Activated CD4-positive, alpha-beta memory T cell treated with anti-CD3 and anti-CD28 coated beads, Interleukin-2, amount 10 ng/mL, durations not matched to agents 7 days and 5 days (primary cell): ENCODE measurements at regions of chr17 and their contacts with region 1.

Region 1: DNA sequence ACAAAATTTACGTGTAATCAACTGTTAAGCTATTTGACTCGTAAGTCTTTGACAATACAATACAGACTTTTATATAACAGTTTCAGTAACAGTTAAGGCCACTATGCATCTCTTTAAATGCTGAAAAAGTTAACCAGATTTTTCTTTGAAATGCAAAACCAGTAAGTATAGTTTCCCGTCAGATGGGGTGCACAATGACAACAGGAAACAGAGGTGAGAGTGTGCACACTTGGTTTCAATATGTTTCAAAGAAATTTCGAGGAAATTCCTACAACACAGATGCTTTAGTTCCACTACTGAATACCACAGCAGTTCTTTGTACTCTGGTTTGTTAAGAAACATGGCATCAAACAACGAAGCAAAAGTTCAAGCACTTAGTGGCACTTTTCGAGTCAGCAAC is 48.4 kb downstream of the RNF157 start:
- DNase-seq: peak; percentile 59
- H3K4me3 Mint-ChIP-seq: peak overlapping the region; percentile 62
- H3K27ac Mint-ChIP-seq: peak overlapping the region; percentile 96
- H3K4me1 Mint-ChIP-seq: peaks cover 88% of the 10 kb centered on the region
- H3K27me3 Mint-ChIP-seq: no peaks in the 10 kb centered on the region

Region 2: DNA sequence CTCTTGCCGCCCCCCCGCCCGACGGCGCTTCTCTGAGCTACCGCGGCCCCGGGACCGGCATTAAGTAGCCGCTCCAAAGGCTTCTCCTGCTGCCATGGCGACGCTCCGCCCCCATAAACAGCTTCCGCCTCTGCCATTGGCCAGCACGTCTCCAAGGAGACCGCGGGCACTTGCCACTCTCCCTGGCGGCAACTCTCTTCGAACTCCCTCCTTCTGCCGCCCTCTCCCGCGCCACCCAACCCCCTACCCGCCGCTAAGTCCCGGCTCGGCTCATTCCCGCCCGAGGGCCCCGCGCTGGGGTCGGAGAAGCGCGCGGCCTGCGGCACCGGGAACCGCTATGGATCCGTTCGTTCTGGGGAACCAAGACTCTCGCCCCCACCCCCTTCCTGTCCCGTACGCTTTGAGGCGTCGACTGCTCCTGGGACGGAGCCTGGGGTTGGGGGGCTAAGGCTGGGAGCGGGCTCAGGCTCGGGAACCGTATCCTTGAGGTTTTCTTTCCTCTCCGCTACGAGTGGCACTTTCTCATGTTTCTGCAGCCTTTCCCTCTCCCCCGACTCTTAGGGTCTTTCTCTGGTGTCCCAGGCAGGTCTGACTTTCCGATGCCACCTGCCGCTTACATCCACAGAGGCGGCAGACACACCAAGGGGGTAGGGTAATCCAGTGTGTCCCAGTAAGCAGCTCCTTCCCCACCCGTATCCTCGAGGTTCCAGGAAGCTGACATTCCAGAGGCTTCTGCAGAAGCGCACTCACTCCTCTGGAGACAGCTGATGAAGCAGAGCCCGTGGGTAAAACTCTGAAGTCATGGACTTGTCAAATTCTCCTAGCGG is 50.5 kb before region 1 on chr17 and contains the start of gene FOXJ1:
- CTCF ChIA-PET with region 1: interaction called, 7 read pairs
- POLR2A ChIA-PET with region 1: interaction called, 23 read pairs
- DNase-seq: peak; percentile 94
- H3K4me3 Mint-ChIP-seq: peak within 1 kb of the TSS; percentile 71
- H3K27ac Mint-ChIP-seq: peak within 1 kb of the TSS; percentile 91
- H3K4me1 Mint-ChIP-seq: peaks cover 60% of the 10 kb centered on the region
- H3K27me3 Mint-ChIP-seq: peaks cover 14% of the 10 kb centered on the region
- total RNA-seq, gene FOXJ1: 0.13 to 0.15 TPM

Region 3: DNA sequence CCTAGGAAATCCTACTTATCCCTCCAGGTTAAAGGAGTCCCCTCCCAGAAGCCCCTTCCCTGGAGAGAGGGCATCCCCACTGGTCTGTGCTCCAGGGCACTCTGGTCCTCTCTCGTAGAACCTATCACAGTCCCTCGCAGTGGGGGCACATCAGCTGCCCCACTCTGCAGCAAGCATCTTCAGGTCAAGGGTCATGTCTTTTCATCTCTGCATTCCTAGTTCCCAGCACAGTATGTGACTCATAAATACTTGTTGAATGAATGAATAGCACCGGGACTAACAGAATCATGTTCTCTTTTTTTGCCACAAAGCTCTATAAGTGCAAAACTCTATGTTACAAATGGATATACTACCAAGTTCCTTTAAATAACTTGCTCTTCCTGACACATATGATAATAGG is 12.4 kb after region 1 on chr17:
- CTCF ChIA-PET with region 1: interaction called, 46 read pairs
- POLR2A ChIA-PET with region 1: interaction called, 102 read pairs
- DNase-seq: no peak
- H3K4me3 Mint-ChIP-seq: no peak overlapping the region
- H3K27ac Mint-ChIP-seq: no peak overlapping the region
- H3K4me1 Mint-ChIP-seq: peaks cover 68% of the 10 kb centered on the region
- H3K27me3 Mint-ChIP-seq: no peaks in the 10 kb centered on the region

Region 4: GRCh38 chr17:76240461-76241203 is 48.7 kb after region 1 on chr17 and contains the start of gene RNF157:
- CTCF ChIA-PET with region 1: interaction called, 24 read pairs
- POLR2A ChIA-PET with region 1: interaction called, 104 read pairs
- DNase-seq: peak; percentile 73
- H3K4me3 Mint-ChIP-seq: peak within 1 kb of the TSS; percentile 81
- H3K27ac Mint-ChIP-seq: peak within 1 kb of the TSS; percentile 85
- H3K4me1 Mint-ChIP-seq: peaks cover 74% of the 10 kb centered on the region
- H3K27me3 Mint-ChIP-seq: peaks cover 7% of the 10 kb centered on the region
- total RNA-seq, gene RNF157: 79.8 to 83.9 TPM

Region 5: GRCh38 chr17:76252040-76252954 is 60.4 kb after region 1 on chr17:
- CTCF ChIA-PET with region 1: interaction called, 6 read pairs
- POLR2A ChIA-PET with region 1: interaction called, 104 read pairs
- DNase-seq: peak; percentile 66
- H3K4me3 Mint-ChIP-seq: peak overlapping the region; percentile 72
- H3K27ac Mint-ChIP-seq: peak overlapping the region; percentile 97
- H3K4me1 Mint-ChIP-seq: peaks cover 73% of the 10 kb centered on the region
- H3K27me3 Mint-ChIP-seq: no peaks in the 10 kb centered on the region